BJ (cell line): ENCODE measurements at regions of chr9 and their contacts with region 1.

Region 1: DNA sequence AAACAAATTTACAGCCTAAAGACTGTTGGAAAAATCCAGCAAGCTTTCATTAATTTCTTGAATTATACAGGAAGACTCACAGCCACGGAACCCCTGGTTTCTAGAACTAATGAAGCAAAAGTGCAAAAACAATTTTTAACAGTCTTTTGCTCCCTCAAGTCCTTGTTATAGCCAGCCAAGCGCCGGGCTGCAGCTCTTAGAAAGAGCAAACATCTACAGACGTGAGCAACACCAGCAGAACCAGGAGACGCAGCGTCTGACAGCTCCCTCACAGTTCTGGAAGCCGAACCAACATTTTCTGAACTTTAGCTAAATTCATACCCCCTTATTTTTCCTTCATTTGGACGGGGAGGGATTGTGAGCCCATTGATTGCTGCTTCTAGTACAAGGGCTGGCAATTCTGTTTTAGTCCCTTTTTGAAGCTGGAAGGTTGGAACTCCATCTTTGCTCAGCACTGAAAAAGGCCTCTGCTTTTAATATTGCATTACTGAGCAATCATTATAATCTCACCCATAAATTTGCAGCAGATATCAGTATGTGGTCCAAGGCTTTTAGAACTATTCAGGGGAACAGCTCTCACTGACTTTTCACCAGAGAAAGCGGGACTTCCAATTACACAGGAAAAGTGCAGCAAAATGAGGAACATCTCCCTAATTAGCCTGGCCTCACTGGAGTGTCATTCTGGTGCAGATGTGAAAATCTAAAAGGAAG is 45.8 kb downstream of the AK8 start:
- DNase-seq: no peak
- H3K4me3 ChIP-seq: no peak overlapping the region
- H3K27me3 ChIP-seq: peaks cover 14% of the 10 kb centered on the region
- CTCF ChIP-seq: no peak

Region 2: DNA sequence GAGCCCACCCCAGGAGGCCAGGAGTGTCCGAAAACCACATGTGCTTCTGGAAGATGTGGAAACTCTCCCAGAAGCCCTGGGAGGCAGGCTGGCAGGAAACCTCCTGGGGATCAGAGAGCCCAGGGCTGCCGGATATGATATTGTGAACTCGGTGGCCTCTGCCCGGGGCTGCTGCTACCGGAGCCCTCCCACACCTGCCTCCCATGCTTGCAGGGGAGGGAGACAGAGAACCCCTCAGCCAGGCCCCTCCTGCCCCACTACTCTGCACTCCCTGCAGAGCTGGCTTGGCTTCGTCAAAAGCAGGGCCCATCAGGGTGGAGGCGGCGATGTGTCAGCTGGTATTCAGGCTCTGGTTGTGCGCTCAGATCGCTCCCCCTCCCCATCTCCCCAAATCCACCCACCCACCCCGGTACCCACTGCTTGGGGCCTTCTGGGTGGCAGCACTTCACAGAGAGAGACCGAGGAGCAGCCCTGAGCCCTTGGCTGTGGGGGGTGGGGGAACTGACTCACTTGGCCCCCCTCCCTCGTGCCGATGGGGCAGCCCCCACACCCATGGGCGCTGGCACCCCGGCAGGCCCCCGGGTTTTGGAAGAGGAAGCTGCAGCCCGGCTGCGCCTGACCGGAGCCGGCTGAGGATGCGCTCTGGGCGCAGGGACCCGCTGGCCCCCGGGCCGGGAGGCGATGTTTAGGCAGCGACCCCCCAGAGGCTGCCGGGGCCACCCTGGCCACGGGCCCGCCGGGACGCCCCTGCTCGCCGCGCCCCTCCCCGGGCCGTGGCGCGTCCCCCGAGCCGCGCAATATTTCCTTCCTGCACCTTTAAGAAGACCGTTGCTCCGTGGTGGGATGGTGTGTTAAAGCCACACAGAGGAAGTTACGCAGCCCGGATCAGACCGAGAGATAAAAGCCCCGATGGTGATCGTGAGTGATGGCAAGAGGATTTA is 671.3 kb before region 1 on chr9:
- CTCF ChIA-PET with region 1: no interaction called
- POLR2A ChIA-PET with region 1: interaction called, 18 read pairs
- DNase-seq: no peak
- H3K4me3 ChIP-seq: peak overlapping the region; percentile 48
- H3K27me3 ChIP-seq: peaks cover 36% of the 10 kb centered on the region
- CTCF ChIP-seq: no peak

Region 3: DNA sequence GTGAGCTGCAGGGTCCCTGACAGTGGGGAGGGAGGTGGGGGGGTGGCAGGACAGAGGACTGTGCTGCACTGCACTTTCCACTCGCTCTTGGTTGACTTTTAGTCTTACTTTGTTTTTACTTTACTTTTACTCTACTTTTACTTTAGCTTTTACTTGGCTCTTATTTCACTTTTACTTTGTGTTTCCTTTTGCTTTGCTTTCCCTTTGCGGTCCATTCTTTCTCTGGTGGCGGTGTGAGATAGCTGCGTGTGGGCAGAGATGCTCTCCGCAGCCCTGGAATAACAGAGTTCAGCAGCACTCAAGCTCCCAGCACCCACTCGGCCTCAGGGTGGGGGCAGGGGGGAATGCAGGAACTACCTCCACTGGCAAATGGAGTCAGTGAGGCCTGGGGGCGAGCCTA is 41.1 kb after region 1 on chr9:
- CTCF ChIA-PET with region 1: no interaction called
- POLR2A ChIA-PET with region 1: no interaction called
- DNase-seq: no peak
- H3K4me3 ChIP-seq: no peak overlapping the region
- H3K27me3 ChIP-seq: no peaks in the 10 kb centered on the region
- CTCF ChIP-seq: no peak